PC-3 (cell line): ENCODE measurements at regions of chr11 and their contacts with region 1.

Region 1: DNA sequence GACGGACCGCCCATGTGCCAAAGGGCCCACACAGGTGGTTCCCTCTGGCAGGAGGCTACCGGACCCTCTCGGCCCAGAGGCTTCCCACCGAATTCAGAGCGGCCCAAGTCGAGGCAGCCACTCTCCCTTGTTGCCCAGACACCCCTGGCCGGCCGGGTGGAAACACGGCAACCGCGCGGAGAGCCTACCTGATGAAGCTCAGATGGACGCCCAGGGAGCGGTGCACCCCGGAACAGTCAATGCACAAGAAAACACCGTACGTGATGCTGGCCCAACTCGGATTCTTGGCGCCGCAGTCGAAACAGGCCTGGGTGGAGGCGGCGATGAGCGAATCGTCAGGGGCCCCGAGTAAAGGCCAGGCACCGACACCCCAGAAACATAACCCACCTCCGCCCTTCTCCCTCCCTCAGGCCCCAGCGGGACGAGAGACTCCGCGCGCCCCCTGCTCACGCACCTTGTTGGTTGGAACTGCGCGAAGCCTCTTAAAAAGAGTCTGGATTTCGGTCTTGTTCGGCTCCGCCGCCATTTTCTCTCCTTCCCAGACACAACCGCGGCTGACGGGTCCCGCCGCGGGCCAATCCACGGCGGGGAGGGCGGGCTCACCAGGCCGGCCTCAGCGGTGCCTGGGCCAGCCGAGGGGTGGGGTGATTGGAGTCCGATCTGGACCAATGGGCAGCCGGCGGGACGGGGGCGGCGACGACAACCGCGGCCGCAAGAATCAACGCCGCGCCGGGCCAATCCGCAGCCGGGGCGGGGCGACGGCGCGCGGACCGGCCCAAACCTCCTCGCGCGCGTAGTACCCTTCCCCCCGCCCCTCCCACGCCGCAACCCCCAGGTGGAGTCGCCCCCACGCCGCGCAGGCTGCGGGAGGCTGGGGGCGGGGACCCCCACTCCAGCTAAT is at the start of gene ARFGAP2:
- DNase-seq: peak; percentile 95
- ATAC-seq: peak; percentile 93
- H3K4me3 ChIP-seq: peak within 1 kb of the TSS; percentile 94
- H3K27ac ChIP-seq: peak within 1 kb of the TSS; percentile 77
- H3K4me1 ChIP-seq: 0 out of 2 replicates have a peak, but pooled peaks cover 8% of the 10 kb centered on the region
- H3K27me3 ChIP-seq: no peaks in the 10 kb centered on the region
- CTCF ChIP-seq: no peak
- total RNA-seq, gene ARFGAP2: 97.5 and 125 TPM in 2 replicates

Region 2: DNA sequence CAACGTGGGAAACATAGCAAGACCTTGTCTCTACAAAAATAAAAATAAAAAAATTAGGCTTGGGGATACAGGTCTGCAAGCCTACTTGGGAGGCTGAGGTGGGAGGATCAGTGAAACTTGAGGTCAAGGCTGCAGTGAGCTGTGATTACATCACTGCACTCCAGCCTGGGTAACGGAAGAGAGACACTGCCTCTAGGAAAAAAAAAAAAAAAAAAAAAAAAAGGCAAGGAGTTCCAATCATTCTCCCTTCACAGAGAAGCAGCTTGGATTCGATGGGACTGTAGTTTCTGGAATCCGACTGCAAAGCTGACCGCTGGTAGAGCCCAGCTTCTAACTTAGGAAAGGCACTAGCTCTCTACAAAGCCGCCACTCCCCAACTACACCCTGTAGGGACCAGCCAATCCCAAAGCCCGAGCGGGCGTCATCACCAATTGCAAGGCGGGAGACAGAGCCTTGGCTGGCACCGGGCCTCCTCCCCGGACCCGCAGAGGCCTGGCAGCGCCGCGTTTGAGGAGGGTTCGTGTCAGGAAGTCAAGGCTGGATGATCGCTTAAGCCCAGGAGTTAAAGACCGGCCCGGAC is 37.5 kb after region 1 on chr11:
- CTCF ChIA-PET with region 1: interaction called, 7 read pairs
- POLR2A ChIA-PET with region 1: no interaction called
- intact Hi-C with region 1: loop called (anchors 2 kb)
- DNase-seq: peak; percentile 91
- ATAC-seq: peak; percentile 78
- H3K4me3 ChIP-seq: peak overlapping the region; percentile 77
- H3K27ac ChIP-seq: peak overlapping the region; percentile 83
- H3K4me1 ChIP-seq: peaks cover 25% of the 10 kb centered on the region
- H3K27me3 ChIP-seq: no peaks in the 10 kb centered on the region
- CTCF ChIP-seq: no peak

Region 3: DNA sequence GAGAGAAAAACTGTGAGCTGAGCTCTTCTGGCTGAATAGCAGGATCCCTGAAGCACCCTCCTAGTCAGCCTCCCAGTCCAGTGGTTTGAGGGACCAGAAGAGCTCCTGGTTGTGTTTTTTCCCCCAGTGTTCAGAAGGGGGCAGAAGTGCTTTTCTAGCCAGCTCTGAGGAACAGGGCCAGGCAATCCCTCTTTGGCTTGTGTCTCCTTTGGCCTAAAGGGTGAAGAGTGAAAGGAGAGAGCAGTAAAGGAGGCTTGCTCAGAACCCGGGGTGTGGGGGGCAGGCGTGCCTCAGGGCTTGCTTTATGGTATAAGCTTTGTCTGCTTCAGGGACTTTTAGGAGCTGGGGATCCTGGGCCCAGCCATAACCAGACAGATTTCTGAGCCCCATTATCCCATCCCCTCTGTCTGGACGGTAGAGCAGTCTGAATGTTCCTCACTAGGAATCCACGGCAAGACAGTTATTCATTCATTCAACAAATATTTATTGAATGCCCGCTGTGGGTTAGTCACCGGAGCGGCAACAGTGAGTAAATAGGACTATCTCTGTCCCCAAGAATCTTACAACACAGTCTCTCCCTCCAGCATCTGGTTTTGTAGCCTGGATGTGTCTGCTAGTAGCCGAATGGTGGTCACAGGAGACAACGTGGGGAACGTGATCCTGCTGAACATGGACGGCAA is 57.6 kb after region 1 on chr11:
- CTCF ChIA-PET with region 1: interaction called, 3 read pairs
- POLR2A ChIA-PET with region 1: no interaction called
- intact Hi-C with region 1: loop called (anchors 1 kb)
- DNase-seq: peak; percentile 87
- ATAC-seq: peak; percentile 77
- H3K4me3 ChIP-seq: peak overlapping the region; percentile 63
- H3K27ac ChIP-seq: peak overlapping the region; percentile 91
- H3K4me1 ChIP-seq: peaks cover 43% of the 10 kb centered on the region
- H3K27me3 ChIP-seq: no peaks in the 10 kb centered on the region
- CTCF ChIP-seq: peak; percentile 58

Region 4: DNA sequence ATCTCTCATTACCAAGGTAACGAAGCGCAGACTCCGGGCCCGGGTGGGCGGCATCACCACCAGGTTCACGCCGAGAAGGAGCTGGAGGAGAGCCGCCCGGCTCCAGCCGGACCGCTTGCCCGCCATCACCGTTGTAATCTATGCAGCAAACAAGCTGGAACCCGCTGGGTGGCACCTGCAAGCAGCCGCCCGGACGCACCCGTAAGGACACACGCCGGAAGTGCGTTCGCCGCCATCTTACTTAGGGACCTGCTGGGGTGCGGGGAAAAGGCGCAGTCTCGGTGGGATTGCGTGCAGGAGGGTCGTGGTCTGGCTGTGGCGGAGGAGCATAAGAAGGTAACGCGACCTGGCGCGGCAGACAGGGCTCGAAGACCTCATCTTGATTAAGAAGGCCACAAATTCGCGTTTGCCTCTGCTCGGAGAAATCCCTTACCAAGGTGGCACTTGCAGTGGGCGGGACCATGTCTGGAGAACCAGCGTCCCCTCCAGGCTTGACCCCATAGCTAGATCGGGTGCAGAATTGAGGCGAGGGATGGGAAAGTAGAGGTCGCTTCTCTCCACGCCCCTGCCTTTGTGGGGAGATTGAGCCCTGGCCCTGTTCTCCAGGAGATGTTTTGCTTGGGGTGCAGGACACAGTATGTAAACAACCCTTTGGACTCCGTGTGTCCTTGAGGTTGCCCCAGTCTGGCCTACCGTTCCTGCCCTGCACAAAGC is 72.2 kb after region 1 on chr11 and contains the start of gene ACP2:
- CTCF ChIA-PET with region 1: no interaction called
- POLR2A ChIA-PET with region 1: no interaction called
- intact Hi-C with region 1: loop called (anchors 2 kb)
- DNase-seq: peak; percentile 83
- ATAC-seq: peak; percentile 94
- H3K4me3 ChIP-seq: peak within 1 kb of the TSS; percentile 98
- H3K27ac ChIP-seq: peak within 1 kb of the TSS; percentile 59
- H3K4me1 ChIP-seq: peaks cover 7% of the 10 kb centered on the region; the same call in 1 of the 2 replicates
- H3K27me3 ChIP-seq: no peaks in the 10 kb centered on the region
- CTCF ChIP-seq: peak; percentile 44; the same call in 1 of the 2 replicates
- total RNA-seq, gene ACP2: 24.2 and 26.6 TPM in 2 replicates

Region 5: DNA sequence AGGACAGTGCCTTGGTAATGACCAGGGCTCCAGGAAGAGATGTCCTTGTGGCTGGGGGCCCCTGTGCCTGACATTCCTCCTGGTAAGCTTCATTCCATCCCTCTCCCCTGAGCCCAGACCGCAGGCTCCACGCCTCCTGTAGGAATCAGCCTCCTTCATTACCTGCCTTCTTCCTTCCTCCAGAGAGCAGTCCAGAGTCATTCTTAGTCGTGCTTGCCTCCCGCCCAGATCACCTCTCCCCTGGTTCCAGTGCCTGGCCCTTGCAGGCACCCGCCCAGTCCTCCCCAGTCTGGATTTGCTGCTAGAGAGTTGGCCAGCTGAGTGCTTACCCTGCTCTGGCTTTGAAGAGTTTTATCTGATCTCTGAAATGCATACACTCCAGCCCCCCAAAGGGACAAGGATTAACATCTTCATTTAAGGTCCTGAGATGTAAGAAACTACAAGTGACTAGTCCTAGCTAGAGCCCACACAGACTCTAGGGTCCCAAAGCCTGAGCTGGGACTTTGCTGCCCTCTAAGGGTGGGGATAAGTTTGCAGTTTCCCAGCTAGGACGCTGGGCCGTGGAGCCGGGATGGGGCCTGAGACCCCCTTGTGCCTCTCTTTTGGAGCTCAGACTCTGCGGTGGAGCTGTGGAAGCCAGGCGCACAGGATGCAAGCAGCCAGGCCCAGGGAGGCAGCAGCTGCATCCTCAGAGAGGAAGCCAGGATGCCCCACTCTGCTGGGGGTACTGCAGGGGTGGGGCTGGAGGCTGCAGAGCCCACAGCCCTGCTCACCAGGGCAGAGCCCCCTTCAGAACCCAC is 82.8 kb after region 1 on chr11:
- CTCF ChIA-PET with region 1: interaction called, 4 read pairs
- POLR2A ChIA-PET with region 1: no interaction called
- intact Hi-C with region 1: loop called (anchors 1 kb)
- DNase-seq: peak; percentile 82
- ATAC-seq: peak; percentile 96
- H3K4me3 ChIP-seq: peak overlapping the region; percentile 26; the same call in 1 of the 2 replicates
- H3K27ac ChIP-seq: peak overlapping the region; percentile 46
- H3K4me1 ChIP-seq: peaks cover 37% of the 10 kb centered on the region
- H3K27me3 ChIP-seq: no peaks in the 10 kb centered on the region
- CTCF ChIP-seq: peak; percentile 86

Region 6: DNA sequence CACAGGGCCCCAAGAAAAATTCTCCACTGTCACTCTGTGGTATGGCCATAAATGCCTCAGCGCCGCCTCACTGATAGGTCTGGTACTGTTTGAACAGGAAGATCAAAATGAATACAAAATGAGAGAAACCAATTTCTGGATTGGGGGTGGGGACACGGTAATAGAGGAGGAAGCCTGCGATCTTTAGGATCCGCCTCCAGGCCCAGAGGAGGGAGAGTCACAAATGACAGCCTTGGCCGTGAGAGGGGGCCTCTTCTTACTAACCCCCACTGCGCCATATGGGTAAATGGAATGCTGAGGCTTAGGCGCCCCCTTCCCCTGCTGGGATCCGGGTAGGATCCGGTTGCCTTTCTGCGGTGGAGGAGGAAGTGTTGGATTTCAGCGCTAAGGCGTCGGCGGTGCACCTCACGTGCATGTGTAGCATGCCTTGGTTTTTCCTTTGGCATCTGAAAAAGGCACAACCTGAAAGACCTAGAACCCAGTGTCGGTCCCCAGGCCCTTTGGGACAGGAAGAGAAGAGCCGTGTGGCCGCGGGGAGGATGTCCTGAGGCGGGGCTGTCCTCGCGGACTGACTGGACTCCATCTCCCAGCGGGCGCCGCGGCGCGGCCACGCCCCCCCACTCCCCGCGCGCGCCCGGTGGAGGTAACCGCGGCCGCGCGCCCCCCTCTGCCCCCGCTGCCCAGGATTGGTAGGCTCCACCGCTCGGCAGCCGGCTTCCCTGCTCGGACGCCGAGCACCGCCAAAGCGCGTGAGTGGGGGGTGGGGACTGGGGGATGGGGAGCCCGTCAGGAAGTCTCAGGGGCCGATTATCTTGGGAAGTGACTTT is 92.6 kb after region 1 on chr11:
- CTCF ChIA-PET with region 1: no interaction called
- POLR2A ChIA-PET with region 1: no interaction called
- intact Hi-C with region 1: loop called (anchors 1 kb)
- DNase-seq: peak; percentile 83
- ATAC-seq: peak; percentile 70
- H3K4me3 ChIP-seq: peak overlapping the region; percentile 71
- H3K27ac ChIP-seq: peak overlapping the region; percentile 82
- H3K4me1 ChIP-seq: peaks cover 30% of the 10 kb centered on the region
- H3K27me3 ChIP-seq: no peaks in the 10 kb centered on the region
- CTCF ChIP-seq: no peak

Region 7: DNA sequence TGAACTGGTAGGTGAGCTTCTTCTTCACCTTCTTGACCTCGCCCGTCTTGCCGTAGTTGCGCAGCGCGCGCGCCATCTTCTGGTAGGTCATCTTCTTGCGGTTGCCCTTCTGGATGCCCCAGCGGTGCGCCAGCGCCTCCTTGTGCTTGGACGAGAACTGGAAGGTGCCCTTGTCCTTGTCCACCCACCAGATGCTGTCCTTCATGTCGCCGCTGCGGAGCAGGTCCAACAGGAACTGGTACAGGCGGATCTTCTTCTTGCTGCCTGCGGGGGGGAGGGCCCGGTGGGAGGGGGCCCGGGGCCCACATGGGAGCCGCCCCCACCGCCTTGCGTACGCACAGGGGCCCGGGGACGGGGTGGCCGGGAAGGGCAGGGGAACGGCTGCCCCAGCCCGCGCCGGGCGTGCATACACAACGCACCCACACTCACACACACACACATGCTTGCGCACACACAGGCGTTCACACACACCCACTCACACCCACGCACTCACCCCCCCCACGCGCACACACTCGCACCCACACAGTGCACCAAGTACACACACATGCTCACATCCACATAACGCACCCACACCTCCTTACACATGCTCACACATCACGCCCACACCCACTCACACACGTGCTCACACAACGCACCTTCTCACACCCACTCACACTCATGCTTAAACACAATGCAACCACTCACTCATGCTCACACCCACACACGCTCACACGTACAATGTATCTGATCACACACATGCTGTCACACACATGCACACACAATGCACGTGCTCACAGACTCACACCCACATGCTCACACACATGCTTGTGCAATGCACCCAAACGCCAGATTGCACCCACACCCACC is 178.9 kb after region 1 on chr11:
- CTCF ChIA-PET with region 1: interaction called, 7 read pairs
- POLR2A ChIA-PET with region 1: no interaction called
- intact Hi-C with region 1: loop called (anchors 1 kb)
- DNase-seq: peak; percentile 95
- ATAC-seq: peak; percentile 96
- H3K4me3 ChIP-seq: peak overlapping the region; percentile 58
- H3K27ac ChIP-seq: no peak overlapping the region
- H3K4me1 ChIP-seq: no peaks in the 10 kb centered on the region
- H3K27me3 ChIP-seq: no peaks in the 10 kb centered on the region
- CTCF ChIP-seq: peak; percentile 98